Activated naive CD4-positive, alpha-beta T cell treated with anti-CD3 and anti-CD28 coated beads, Interleukin-2, amount 10 ng/mL, durations not matched to agents 7 days and 5 days (primary cell): ENCODE measurements at regions of chr17 and their contacts with region 1.

Region 1: DNA sequence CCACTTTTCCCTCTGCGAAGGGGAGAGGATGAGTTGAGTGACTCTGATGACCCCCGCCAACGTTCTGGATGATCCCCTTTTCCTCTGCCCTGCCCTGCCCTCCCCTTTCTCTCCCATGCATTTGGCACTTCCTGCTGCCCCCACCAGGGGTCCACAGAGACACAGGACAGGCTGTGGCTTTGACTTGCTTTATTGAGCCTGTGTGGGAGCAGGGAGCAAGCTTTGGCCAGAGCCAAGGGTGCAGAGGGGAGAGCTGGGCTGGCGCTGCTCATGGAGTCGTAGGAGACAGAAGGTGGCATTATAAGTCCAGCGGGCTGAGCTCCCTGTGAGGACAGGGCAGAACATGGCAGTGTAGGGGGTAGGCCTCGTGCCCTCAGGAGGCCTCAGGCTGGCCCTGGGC is 1.6 kb downstream of the PPY start:
- DNase-seq: peak; percentile 44
- H3K4me3 Mint-ChIP-seq: no peak overlapping the region
- H3K27ac Mint-ChIP-seq: peak overlapping the region; percentile 33
- H3K4me1 Mint-ChIP-seq: peaks cover 16% of the 10 kb centered on the region
- H3K27me3 Mint-ChIP-seq: peaks cover 54% of the 10 kb centered on the region

Region 2: DNA sequence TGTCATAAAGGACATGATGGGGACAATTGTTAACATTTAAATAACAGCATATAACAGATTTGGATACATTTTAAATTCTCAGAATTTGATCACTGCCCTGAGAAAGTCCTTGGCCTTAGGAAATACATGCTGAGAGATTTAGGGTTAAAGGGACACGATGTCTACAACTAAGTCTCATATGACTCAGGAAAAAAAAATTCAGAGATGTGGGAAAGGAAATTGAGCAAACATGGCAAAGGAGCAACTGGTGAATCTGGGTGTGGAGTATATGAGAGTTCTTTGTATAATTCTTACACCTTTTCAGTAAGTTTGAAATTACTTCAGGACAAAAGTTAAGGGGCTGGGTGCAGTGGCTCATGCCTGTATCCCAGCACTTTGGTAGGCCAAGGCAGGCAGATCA is 125.9 kb before region 1 on chr17:
- CTCF ChIA-PET with region 1: no interaction called
- DNase-seq: no peak
- H3K4me3 Mint-ChIP-seq: no peak overlapping the region
- H3K27ac Mint-ChIP-seq: no peak overlapping the region
- H3K4me1 Mint-ChIP-seq: no peaks in the 10 kb centered on the region
- H3K27me3 Mint-ChIP-seq: peaks cover 29% of the 10 kb centered on the region

Region 3: GRCh38 chr17:43917348-43918018 is 23.1 kb before region 1 on chr17:
- CTCF ChIA-PET with region 1: interaction called, 10 read pairs
- DNase-seq: peak; percentile 75
- H3K4me3 Mint-ChIP-seq: peak overlapping the region; percentile 65
- H3K27ac Mint-ChIP-seq: peak overlapping the region; percentile 80
- H3K4me1 Mint-ChIP-seq: peaks cover 21% of the 10 kb centered on the region
- H3K27me3 Mint-ChIP-seq: peaks cover 22% of the 10 kb centered on the region

Region 4: DNA sequence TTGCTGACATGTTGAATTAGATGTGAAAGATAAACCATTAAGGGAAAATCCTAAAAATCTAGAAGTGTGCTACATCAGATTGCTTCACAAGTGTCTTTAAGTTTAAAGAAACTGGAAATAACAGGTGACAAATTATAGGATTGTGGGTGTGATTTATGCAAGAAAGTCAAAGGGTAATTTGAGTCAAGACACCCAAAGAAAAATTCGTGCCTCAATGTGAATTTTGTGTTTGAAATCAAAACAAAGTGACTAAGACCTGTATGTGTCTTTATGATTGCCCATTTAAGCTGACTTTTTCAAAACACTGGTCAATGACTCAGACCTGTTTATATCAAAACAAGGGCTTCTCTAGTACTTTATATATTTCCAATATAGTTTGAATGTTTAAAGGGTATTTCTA is 18.3 kb after region 1 on chr17:
- CTCF ChIA-PET with region 1: interaction called, 15 read pairs
- DNase-seq: no peak
- H3K4me3 Mint-ChIP-seq: no peak overlapping the region
- H3K27ac Mint-ChIP-seq: no peak overlapping the region
- H3K4me1 Mint-ChIP-seq: no peaks in the 10 kb centered on the region
- H3K27me3 Mint-ChIP-seq: peaks cover 50% of the 10 kb centered on the region

Region 5: DNA sequence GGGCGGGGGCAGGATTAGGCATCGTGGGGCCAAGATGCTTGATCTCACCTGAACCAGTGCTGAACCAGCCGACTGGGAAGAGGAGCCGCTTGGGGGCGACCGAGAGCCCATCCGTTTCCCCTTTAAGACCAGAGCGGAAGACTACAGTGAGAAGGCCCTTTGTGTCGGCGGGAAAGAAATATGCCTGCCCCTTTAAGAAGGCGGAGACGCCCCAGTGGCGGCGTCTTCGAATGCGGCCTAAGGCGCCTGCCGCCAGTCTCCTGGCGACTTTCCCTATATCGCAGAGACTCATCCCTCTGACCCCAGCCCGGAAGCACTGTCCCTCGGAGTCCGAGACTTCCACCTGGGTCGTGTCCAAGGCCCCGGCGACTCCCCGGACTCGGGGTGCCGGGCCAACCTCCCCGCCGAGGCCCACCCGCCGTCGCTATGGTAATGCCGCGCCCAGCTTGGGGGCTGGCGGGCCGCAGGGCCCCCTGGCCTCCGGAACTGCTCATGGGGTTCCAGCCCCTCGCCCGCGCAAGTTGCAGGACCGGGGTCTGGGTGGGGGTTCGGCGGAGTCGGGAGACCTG is 201.2 kb after region 1 on chr17 and contains the start of gene HROB:
- CTCF ChIA-PET with region 1: no interaction called
- DNase-seq: peak; percentile 99
- H3K4me3 Mint-ChIP-seq: peak within 1 kb of the TSS; percentile 80
- H3K27ac Mint-ChIP-seq: peak within 1 kb of the TSS; percentile 91
- H3K4me1 Mint-ChIP-seq: peaks cover 32% of the 10 kb centered on the region
- H3K27me3 Mint-ChIP-seq: peaks cover 16% of the 10 kb centered on the region